ENCODE measurements at regions of chr19 and their contacts with region 1.

Region 1: GRCh38 chr19:49766007-49766937 is 529 bp upstream of the AP2A1 start:
- DNase-seq: peak; percentile 95 to 100 (median 99)
- ATAC-seq: peak; percentile 89 to 90 (median 90)
- H3K4me3 ChIP-seq: peak overlapping the region; percentile 47 to 59
- H3K4me3 Mint-ChIP-seq: peak overlapping the region; percentile 84 to 94 (median 89)
- H3K27ac ChIP-seq: peak overlapping the region; percentile 46
- H3K27ac Mint-ChIP-seq: peak overlapping the region; percentile 98 to 99
- H3K4me1 ChIP-seq: peaks cover 12 to 47% of the 10 kb centered on the region in 2 experiments
- H3K4me1 Mint-ChIP-seq: peaks cover 35 to 42% (median 40%) of the 10 kb centered on the region in 3 donors
- H3K27me3 ChIP-seq: no peaks in the 10 kb centered on the region
- H3K27me3 Mint-ChIP-seq: no peaks in the 10 kb centered on the region

Region 2: DNA sequence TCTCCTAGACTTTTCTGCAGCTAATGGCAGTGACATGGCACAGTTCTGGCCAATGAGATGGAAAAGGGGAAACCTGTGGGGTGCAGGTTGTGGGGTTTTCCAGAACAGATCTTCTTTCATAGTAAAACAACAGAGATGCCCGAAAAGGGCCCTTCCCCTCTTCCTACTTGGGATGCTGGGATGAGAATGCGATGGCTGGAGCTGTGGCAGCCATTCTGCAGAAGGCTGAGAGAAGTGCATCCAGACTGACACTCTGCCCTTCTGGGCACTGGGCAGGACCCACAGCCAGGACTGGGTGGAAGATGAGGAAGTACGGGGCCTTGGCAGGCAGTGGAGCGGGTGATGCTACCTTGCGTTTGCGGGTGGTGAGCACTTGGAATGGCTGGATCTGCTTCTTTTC is 1638.7 kb before region 1 on chr19:
- CTCF ChIA-PET with region 1: no interaction called
- POLR2A ChIA-PET with region 1: interaction called in 1 of 2 experiments, 11 read pairs
- DNase-seq: no peak
- ATAC-seq: no peak
- H3K4me3 ChIP-seq: no peak overlapping the region
- H3K4me3 Mint-ChIP-seq: no peak overlapping the region
- H3K27ac ChIP-seq: no peak overlapping the region
- H3K27ac Mint-ChIP-seq: no peak overlapping the region
- H3K4me1 ChIP-seq: no peaks in the 10 kb centered on the region
- H3K4me1 Mint-ChIP-seq: no peaks in the 10 kb centered on the region
- H3K27me3 ChIP-seq: no peaks in the 10 kb centered on the region
- H3K27me3 Mint-ChIP-seq: no peaks in the 10 kb centered on the region

Region 3: DNA sequence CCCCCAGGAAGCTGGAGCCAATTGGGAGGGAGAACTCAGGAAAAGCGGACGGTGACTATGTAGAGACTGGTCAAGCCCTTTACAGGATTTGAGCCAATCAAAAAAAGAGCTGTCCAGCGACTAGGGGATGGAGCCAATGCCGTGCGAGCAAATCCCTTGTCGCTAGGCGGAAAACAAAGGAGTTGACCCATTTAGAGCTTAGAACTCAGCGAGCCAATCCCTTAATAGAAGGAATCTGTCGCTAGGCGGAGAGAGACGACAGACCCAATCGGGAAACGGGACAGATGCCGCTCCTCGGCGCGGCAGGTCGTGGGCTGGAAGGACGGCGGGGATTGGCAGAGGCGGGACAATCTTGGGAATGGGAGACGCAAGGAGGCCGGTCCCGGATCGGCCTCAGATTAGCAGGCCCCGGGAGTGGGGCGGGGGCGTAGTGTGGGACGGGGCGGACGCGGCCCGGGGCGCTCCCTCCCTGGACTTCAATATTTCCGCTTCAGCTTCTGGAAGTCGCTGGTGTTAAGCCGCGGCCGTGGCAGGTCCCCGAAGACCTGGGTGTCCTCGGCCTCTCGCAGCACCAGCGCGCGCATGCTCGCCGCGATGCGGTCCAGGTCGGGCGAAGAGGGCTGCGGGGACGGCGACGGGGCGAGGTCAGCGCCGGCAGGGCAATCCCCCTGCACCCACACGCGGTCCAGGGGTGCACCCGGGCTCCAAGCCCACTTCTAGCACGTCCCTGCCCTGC is 103.3 kb after region 1 on chr19:
- CTCF ChIA-PET with region 1: interaction called in 1 of 2 experiments, 3 read pairs
- POLR2A ChIA-PET with region 1: interaction called in 1 of 2 experiments, 12 read pairs
- DNase-seq: peak; percentile 77 to 95 (median 84)
- ATAC-seq: peak; percentile 75 to 81 (median 80)
- H3K4me3 ChIP-seq: peak overlapping the region; percentile 64 to 69
- H3K4me3 Mint-ChIP-seq: no peak overlapping the region
- H3K27ac ChIP-seq: peak overlapping the region; percentile 79
- H3K27ac Mint-ChIP-seq: peak overlapping the region; percentile 83 to 86
- H3K4me1 ChIP-seq: peaks cover 13 to 54% of the 10 kb centered on the region in 2 experiments
- H3K4me1 Mint-ChIP-seq: peaks cover 39 to 53% (median 51%) of the 10 kb centered on the region in 3 donors
- H3K27me3 ChIP-seq: no peaks in the 10 kb centered on the region
- H3K27me3 Mint-ChIP-seq: no peaks in the 10 kb centered on the region

Measured in T-cell (primary cell).